PC-3 (cell line): ENCODE measurements at regions of chr5 and their contacts with region 1.

Region 1: GRCh38 chr5:170070556-170071412 is 34.9 kb upstream of the FOXI1 start:
- DNase-seq: peak; percentile 30
- ATAC-seq: peak; percentile 75
- H3K4me3 ChIP-seq: no peak overlapping the region
- H3K27ac ChIP-seq: no peak overlapping the region
- H3K4me1 ChIP-seq: no peaks in the 10 kb centered on the region
- H3K27me3 ChIP-seq: no peaks in the 10 kb centered on the region
- CTCF ChIP-seq: peak; percentile 78

Region 2: DNA sequence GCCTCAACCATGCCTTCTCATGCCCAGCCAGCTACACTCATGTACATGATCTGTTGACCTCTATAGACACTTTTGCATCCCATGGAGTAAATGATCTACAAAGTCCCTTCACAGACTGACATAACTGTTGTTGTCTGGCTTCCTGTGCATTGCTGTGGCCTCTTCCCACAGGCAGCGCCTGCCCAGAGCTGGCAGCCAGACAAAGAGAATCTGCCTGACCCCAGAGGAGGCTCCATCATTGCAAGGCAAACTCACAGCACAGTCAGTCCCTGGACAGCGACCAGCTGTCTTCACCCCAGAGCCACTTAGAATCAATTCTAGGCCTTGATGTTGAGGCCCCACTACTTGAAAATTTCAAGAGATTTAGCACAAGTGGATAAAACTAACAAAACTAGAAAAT is 156.0 kb before region 1 on chr5:
- CTCF ChIA-PET with region 1: no interaction called
- POLR2A ChIA-PET with region 1: no interaction called
- intact Hi-C with region 1: loop called (anchors 10 kb)
- DNase-seq: no peak
- ATAC-seq: no peak
- H3K4me3 ChIP-seq: no peak overlapping the region
- H3K27ac ChIP-seq: no peak overlapping the region
- H3K4me1 ChIP-seq: peaks cover 4% of the 10 kb centered on the region; the same call in 1 of the 2 replicates
- H3K27me3 ChIP-seq: no peaks in the 10 kb centered on the region
- CTCF ChIP-seq: no peak

Region 3: GRCh38 chr5:169988947-169989346 is 81.8 kb before region 1 on chr5:
- CTCF ChIA-PET with region 1: no interaction called
- POLR2A ChIA-PET with region 1: no interaction called
- intact Hi-C with region 1: loop called (anchors 2 kb)
- DNase-seq: peak; percentile 69
- ATAC-seq: peak; percentile 97
- H3K4me3 ChIP-seq: no peak overlapping the region
- H3K27ac ChIP-seq: peak overlapping the region; percentile 64
- H3K4me1 ChIP-seq: peaks cover 11% of the 10 kb centered on the region
- H3K27me3 ChIP-seq: no peaks in the 10 kb centered on the region
- CTCF ChIP-seq: no peak

Region 4: DNA sequence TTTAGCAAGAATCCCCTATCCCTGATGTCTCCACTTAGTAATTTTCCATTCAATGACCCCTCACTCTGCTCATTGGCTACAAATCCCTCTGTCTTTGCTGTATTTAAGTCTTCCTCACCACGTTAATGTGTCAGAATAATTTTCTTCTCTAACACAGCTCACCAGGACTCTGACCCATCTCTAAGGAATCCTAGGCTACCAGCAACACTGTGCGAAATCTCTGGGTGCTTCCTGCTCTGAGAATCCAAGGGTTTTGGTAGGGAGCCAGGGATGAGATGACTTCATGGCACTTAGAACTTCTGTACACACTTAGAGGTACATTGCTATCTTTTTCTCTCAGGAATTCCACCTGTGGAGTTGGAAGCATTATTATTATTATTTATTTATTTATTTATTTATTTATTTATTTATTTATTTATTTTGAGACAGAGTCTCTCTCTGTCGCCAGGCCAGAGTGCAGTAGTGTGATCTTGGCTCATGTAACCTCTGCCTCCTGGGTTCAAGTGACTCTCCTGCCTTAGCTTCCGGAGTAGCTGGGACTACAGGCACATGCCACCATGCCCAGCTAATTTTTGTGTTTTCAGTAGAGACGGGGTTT is 88.4 kb after region 1 on chr5:
- CTCF ChIA-PET with region 1: no interaction called
- POLR2A ChIA-PET with region 1: no interaction called
- intact Hi-C with region 1: no loop called
- DNase-seq: peak; percentile 32
- ATAC-seq: no peak
- H3K4me3 ChIP-seq: no peak overlapping the region
- H3K27ac ChIP-seq: no peak overlapping the region
- H3K4me1 ChIP-seq: no peaks in the 10 kb centered on the region
- H3K27me3 ChIP-seq: no peaks in the 10 kb centered on the region
- CTCF ChIP-seq: no peak